ENCODE measurements at regions of chr11 and their contacts with region 1.

Region 1: GRCh38 chr11:61516675-61517572 is 8.4 kb downstream of the LRRC10B start:
- DNase-seq: peak; percentile 30
- H3K4me3 Mint-ChIP-seq: no peak overlapping the region
- H3K27ac Mint-ChIP-seq: no peak overlapping the region
- H3K4me1 Mint-ChIP-seq: no peaks in the 10 kb centered on the region
- H3K27me3 Mint-ChIP-seq: no peaks in the 10 kb centered on the region
- CTCF ChIP-seq: peak; percentile 99

Region 2: DNA sequence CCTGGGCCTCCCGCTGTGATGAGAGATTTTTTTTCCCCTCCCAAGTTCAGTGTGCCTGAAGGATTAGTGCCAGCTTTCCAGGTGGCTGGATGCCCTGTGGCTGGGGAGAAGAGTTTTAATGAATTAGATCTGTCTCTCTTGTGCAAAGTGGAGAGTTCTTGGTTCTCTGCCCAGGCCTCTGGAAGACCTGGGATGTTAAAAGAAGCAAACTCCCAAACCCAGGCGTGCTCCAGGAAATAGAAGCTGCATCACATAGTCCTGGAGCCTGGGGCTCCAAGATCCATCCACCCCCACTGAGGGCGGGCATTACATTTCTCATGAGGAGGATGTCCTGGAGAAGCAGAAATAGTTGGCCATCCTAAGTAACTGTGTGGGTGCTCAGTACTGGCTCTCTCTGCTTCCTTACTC is 56.4 kb before region 1 on chr11:
- CTCF ChIA-PET with region 1: interaction called, 15 read pairs
- POLR2A ChIA-PET with region 1: interaction called, 3 read pairs
- intact Hi-C with region 1: no loop called
- DNase-seq: no peak
- H3K4me3 Mint-ChIP-seq: no peak overlapping the region
- H3K27ac Mint-ChIP-seq: no peak overlapping the region
- H3K4me1 Mint-ChIP-seq: no peaks in the 10 kb centered on the region
- H3K27me3 Mint-ChIP-seq: no peaks in the 10 kb centered on the region
- CTCF ChIP-seq: no peak

Region 3: GRCh38 chr11:61488651-61489291 is 28.2 kb before region 1 on chr11:
- CTCF ChIA-PET with region 1: interaction called, 39 read pairs
- POLR2A ChIA-PET with region 1: no interaction called
- intact Hi-C with region 1: no loop called
- DNase-seq: no peak
- H3K4me3 Mint-ChIP-seq: peak overlapping the region; percentile 4
- H3K27ac Mint-ChIP-seq: no peak overlapping the region
- H3K4me1 Mint-ChIP-seq: peaks cover 7% of the 10 kb centered on the region
- H3K27me3 Mint-ChIP-seq: peaks cover 1% of the 10 kb centered on the region
- CTCF ChIP-seq: no peak

Region 4: GRCh38 chr11:61545341-61545740 is 28.4 kb after region 1 on chr11:
- CTCF ChIA-PET with region 1: interaction called, 11 read pairs
- POLR2A ChIA-PET with region 1: no interaction called
- intact Hi-C with region 1: no loop called
- DNase-seq: no peak
- H3K4me3 Mint-ChIP-seq: no peak overlapping the region
- H3K27ac Mint-ChIP-seq: no peak overlapping the region
- H3K4me1 Mint-ChIP-seq: peaks cover 19% of the 10 kb centered on the region
- H3K27me3 Mint-ChIP-seq: no peaks in the 10 kb centered on the region
- CTCF ChIP-seq: peak; percentile 31

Region 5: DNA sequence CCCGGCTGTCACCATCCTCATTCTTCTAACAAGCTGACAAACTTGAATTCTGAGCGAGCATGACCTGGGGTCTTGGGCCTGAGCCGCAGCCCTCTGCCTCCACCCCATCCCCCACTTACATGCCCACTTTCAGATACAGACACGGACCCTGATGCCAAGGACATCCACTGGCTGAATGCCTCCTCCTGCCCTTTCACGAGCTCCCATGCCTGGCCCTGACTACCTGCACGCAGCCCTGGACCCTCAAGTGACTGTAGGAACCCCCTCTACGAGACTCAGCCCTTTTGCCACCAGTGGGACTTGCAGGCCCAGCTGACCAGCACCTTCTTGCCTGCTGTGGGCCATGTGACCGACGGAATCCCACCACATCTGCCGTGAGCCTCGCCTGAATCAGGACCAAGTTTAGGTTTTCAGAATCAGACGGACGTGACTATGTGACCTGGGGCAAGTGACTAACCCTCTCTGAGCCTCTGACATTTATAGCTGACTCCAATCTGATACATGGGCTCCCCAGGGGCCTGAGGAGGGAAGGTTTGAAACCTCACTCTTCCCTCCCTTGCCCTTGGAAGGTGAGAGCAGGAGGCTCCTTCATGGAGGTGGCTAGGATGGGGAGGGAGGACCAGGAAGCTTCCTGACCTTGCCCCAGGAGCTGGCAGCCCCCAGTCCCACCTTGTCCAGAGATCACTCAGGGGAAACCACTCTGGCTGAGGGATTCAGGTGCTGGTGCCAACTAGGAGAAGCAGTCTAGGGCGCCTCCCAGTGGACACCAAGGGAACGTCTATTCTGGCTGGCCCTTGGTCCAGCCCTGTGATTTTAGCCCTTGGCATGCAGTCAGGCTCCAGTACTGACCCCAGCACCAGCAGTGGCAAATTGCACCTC is 110.9 kb after region 1 on chr11:
- CTCF ChIA-PET with region 1: interaction called, 25 read pairs
- POLR2A ChIA-PET with region 1: no interaction called
- intact Hi-C with region 1: no loop called
- DNase-seq: peak; percentile 75
- H3K4me3 Mint-ChIP-seq: no peak overlapping the region
- H3K27ac Mint-ChIP-seq: peak overlapping the region; percentile 54
- H3K4me1 Mint-ChIP-seq: peaks cover 12% of the 10 kb centered on the region
- H3K27me3 Mint-ChIP-seq: no peaks in the 10 kb centered on the region
- CTCF ChIP-seq: peak; percentile 94